ENCODE measurements at regions of chr18 and their contacts with region 1.

Region 1: DNA sequence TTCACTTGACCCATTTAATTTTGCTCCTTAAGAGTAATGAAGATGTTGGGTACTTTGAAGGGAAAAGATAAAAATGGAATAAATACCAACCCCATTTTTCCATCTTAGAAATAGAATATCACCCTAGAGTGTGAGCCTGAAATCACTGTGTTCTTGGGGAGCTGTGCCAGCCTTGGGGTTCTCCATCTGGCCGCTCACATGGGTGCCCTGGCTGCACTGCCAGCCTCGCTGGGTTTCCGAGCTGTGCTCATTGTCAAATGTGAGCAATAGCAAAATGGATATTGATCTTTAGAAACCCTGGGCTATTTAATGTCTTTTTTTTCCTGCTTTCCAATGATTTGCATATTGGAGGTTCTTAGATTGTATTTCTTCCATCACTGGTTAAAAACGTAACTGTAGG is 9.3 kb downstream of the APCDD1 start:
- DNase-seq: no peak
- H3K4me3 ChIP-seq: no peak overlapping the region
- H3K27ac ChIP-seq: peak overlapping the region; percentile 100
- H3K4me1 ChIP-seq: peaks cover 90% of the 10 kb centered on the region
- H3K27me3 ChIP-seq: no peaks in the 10 kb centered on the region
- CTCF ChIP-seq: no peak

Region 2: GRCh38 chr18:9449600-9450414 is 1013.9 kb before region 1 on chr18:
- CTCF ChIA-PET with region 1: no interaction called
- POLR2A ChIA-PET with region 1: no interaction called
- intact Hi-C with region 1: no loop called
- DNase-seq: no peak
- H3K4me3 ChIP-seq: no peak overlapping the region
- H3K27ac ChIP-seq: no peak overlapping the region
- H3K4me1 ChIP-seq: no peaks in the 10 kb centered on the region
- H3K27me3 ChIP-seq: no peaks in the 10 kb centered on the region
- CTCF ChIP-seq: no peak

Region 3: DNA sequence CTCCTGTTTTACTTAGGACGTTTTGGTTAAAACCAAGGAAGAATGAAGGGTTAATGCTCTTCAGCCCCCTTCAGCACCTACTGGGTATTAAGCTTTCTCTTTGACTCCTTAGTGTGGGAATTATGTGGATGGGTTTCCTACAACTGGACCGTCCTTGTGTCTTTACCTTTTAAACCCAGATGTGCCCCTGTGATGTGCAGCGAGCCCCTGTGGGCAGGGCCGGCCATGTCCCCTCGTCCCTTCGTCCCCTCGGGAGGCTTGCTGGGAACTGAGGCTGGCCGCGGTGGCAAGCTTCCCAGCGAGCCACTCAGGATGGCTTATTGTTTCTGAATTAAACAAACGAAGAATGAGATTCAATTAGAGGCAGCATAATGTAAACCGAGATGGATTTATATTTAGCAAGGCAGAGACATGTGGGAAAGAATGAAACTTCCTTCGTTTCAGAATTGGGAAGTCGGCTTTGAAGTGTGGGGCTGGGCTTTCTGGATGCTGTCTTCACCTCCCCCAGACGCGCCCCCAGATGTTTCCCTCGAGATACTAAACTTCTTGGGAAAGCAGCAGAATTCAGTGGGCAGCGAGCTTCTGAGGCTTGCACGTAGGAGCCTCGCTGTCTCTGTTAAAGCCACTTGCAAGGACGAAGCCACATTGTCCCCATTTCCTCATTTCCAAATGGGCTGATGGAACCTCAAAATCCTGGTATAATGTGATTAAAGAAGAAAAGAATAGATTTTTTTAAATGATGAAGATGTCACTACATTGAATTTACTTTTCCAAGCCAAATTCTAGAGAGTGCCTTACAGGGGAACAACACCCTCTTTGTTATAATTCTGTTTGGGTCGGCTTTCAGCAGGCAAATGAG is 403.9 kb before region 1 on chr18:
- CTCF ChIA-PET with region 1: interaction called, 4 read pairs
- POLR2A ChIA-PET with region 1: interaction called, 28 read pairs
- intact Hi-C with region 1: loop called (anchors 1 kb)
- DNase-seq: peak; percentile 65
- H3K4me3 ChIP-seq: no peak overlapping the region
- H3K27ac ChIP-seq: peak overlapping the region; percentile 88
- H3K4me1 ChIP-seq: peaks cover 58% of the 10 kb centered on the region
- H3K27me3 ChIP-seq: no peaks in the 10 kb centered on the region
- CTCF ChIP-seq: no peak

Region 4: DNA sequence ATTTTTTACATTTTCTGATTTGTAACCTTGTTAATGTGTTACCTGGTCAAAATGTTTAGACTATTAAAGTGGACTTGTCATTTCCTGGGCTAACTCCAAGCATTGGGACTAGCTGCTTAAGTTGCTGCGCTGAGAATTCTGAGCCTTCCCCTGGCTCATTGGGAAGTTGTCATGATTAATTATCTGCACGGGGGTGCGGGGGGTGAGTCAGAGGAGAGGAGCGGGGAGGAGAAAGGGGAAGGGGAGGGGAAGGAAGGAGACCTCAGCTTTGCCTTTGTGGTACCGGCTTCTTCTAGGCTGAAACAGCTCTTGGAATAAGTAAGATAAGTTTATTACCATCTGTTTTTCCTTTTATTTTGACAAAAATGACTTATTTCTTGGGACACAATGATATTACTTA is 62.2 kb before region 1 on chr18:
- CTCF ChIA-PET with region 1: no interaction called
- POLR2A ChIA-PET with region 1: no interaction called
- intact Hi-C with region 1: no loop called
- DNase-seq: peak; percentile 74
- H3K4me3 ChIP-seq: no peak overlapping the region
- H3K27ac ChIP-seq: no peak overlapping the region
- H3K4me1 ChIP-seq: peaks cover 81% of the 10 kb centered on the region
- H3K27me3 ChIP-seq: no peaks in the 10 kb centered on the region
- CTCF ChIP-seq: no peak

Region 5: GRCh38 chr18:10476338-10476791 is 12.6 kb after region 1 on chr18:
- CTCF ChIA-PET with region 1: no interaction called
- POLR2A ChIA-PET with region 1: interaction called, 15 read pairs
- intact Hi-C with region 1: loop called (anchors 1 kb)
- DNase-seq: peak; percentile 96
- H3K4me3 ChIP-seq: peak overlapping the region; percentile 14
- H3K27ac ChIP-seq: peak overlapping the region; percentile 100
- H3K4me1 ChIP-seq: peaks cover 89% of the 10 kb centered on the region
- H3K27me3 ChIP-seq: no peaks in the 10 kb centered on the region
- CTCF ChIP-seq: no peak

Region 6: GRCh38 chr18:10504723-10505122 is 41.0 kb after region 1 on chr18:
- CTCF ChIA-PET with region 1: no interaction called
- POLR2A ChIA-PET with region 1: no interaction called
- intact Hi-C with region 1: no loop called
- DNase-seq: no peak
- H3K4me3 ChIP-seq: no peak overlapping the region
- H3K27ac ChIP-seq: no peak overlapping the region
- H3K4me1 ChIP-seq: no peaks in the 10 kb centered on the region
- H3K27me3 ChIP-seq: no peaks in the 10 kb centered on the region
- CTCF ChIP-seq: no peak

Region 7: DNA sequence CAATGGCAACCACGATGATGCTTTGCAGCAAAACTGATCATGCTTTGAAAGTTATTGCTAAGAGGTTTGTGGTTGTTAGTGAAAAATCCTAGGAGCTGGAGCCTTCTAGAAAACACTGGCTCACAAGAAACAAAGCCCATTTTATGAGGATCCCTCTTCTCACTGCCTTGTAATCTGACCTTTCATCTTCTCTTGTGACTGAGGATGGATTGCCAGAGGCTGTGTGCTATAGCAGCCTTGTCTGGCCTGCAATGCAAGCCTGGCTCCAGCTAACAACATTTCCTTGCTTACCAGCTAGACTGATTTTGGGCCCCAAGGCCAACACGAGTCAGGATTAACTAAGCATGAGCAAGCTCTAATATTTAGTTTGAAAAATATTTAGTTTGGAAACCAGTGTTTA is 672.5 kb after region 1 on chr18:
- CTCF ChIA-PET with region 1: no interaction called
- POLR2A ChIA-PET with region 1: no interaction called
- intact Hi-C with region 1: no loop called
- DNase-seq: no peak
- H3K4me3 ChIP-seq: no peak overlapping the region
- H3K27ac ChIP-seq: no peak overlapping the region
- H3K4me1 ChIP-seq: no peaks in the 10 kb centered on the region
- H3K27me3 ChIP-seq: no peaks in the 10 kb centered on the region
- CTCF ChIP-seq: no peak